GM23248 (cell line): ENCODE measurements at regions of chr18 and their contacts with region 1.

Region 1: DNA sequence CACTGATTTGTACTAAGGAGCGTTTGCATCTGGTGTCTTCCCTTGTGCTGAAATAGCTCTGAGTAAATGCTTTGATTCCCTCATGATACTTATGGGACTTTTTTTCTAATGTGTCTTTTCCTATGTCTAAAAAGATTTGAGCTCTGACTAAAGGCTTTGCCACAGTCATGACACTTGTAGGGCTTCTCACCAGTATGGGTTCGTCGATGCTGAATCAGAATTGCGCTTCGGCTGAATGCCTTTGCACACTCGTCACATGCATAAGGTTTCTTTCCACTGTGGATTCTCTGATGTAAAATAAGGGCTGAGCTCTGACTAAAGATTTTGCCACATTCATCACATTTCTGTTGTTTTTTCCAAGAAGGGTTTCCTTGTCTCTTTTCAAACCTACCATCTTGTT is 8.0 kb downstream of the ZNF396 start:
- DNase-seq: peak; percentile 74
- H3K4me3 ChIP-seq: no peak overlapping the region
- H3K27ac ChIP-seq: peak overlapping the region; percentile 59
- H3K4me1 ChIP-seq: peaks cover 17% of the 10 kb centered on the region
- H3K27me3 ChIP-seq: no peaks in the 10 kb centered on the region

Region 2: DNA sequence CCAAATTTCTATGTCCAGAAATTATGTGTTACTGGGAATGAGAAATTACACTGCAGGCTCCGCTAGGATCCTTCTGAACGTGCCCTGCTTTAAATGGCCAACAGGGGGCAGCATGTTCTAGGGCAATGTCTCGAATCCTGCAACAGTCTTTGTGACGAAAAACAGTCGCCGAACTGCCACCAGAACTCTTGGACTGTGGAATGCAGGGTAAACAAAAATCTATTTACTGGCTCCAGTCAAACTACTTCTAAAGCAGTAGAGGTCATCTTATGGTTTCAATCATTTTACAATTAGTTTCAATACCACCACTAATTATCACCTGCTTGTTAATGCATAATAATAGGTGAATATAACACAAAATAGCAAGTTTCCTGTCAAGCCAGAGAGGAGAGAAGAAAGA is 138.1 kb before region 1 on chr18:
- in situ Hi-C with region 1: loop called (anchors 10 kb)
- DNase-seq: peak; percentile 76
- H3K4me3 ChIP-seq: peak overlapping the region; percentile 66
- H3K27ac ChIP-seq: no peak overlapping the region
- H3K4me1 ChIP-seq: no peaks in the 10 kb centered on the region
- H3K27me3 ChIP-seq: no peaks in the 10 kb centered on the region